ENCODE measurements at regions of chrX and their contacts with region 1.

Region 1: GRCh38 chrX:150372280-150372679 is 9.2 kb downstream of the MAMLD1 start:
- DNase-seq: no peak
- ATAC-seq: no peak
- H3K4me3 ChIP-seq: no peak overlapping the region
- H3K27ac ChIP-seq: no peak overlapping the region
- H3K4me1 ChIP-seq: no peaks in the 10 kb centered on the region
- H3K27me3 ChIP-seq: no peaks in the 10 kb centered on the region
- CTCF ChIP-seq: no peak

Region 2: GRCh38 chrX:150486011-150486410 is 113.7 kb after region 1 on chrX:
- intact Hi-C with region 1: loop called in 1 of 2 experiments (anchors 10 kb)
- DNase-seq: peak in 1 of 4 donors; percentile 52
- ATAC-seq: peak; percentile 82
- H3K4me3 ChIP-seq: no peak overlapping the region
- H3K27ac ChIP-seq: no peak overlapping the region
- H3K4me1 ChIP-seq: no peaks in the 10 kb centered on the region
- H3K27me3 ChIP-seq: no peaks in the 10 kb centered on the region
- CTCF ChIP-seq: peak; percentile 34 to 41